ENCODE measurements at regions of chr11 and their contacts with region 1.

Region 1: DNA sequence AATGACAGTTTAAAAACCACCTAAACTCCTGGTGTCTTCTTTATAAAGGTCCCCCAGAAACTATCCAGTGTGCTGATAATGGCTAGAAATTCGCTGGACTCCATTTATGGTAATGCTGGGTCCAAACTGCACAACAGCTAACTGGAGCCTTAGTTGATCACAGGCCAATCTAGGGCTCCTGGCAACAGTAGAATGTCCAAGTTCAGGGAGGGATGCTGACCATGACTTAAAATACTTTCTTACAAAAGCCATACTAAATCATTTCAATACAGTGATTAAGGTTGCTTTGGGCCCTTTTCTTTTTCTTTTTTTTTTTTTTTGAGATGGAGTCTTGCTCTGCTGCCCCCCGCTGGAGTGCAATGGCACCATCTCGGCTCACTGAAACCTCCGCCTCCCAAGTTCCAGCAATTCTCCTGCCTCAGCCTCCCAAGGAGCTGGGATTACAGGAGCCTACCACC is 14.5 kb upstream of the GAB2 start:
- DNase-seq: peak; percentile 17
- ATAC-seq: no peak
- H3K4me3 Mint-ChIP-seq: no peak overlapping the region
- H3K27ac Mint-ChIP-seq: no peak overlapping the region
- H3K4me1 Mint-ChIP-seq: peaks cover 10% of the 10 kb centered on the region
- H3K27me3 Mint-ChIP-seq: no peaks in the 10 kb centered on the region
- CTCF ChIP-seq: peak; percentile 54

Region 2: GRCh38 chr11:78365381-78365792 is 66.7 kb before region 1 on chr11:
- CTCF ChIA-PET with region 1: no interaction called
- POLR2A ChIA-PET with region 1: no interaction called
- intact Hi-C with region 1: no loop called
- DNase-seq: no peak
- ATAC-seq: no peak
- H3K4me3 Mint-ChIP-seq: no peak overlapping the region
- H3K27ac Mint-ChIP-seq: no peak overlapping the region
- H3K4me1 Mint-ChIP-seq: no peaks in the 10 kb centered on the region
- H3K27me3 Mint-ChIP-seq: no peaks in the 10 kb centered on the region
- CTCF ChIP-seq: no peak

Region 3: GRCh38 chr11:78416305-78417178 is 15.5 kb before region 1 on chr11:
- CTCF ChIA-PET with region 1: interaction called, 69 read pairs
- POLR2A ChIA-PET with region 1: no interaction called
- intact Hi-C with region 1: no loop called
- DNase-seq: peak; percentile 86
- ATAC-seq: peak; percentile 76
- H3K4me3 Mint-ChIP-seq: peak overlapping the region; percentile 71
- H3K27ac Mint-ChIP-seq: peak overlapping the region; percentile 37
- H3K4me1 Mint-ChIP-seq: peaks cover 26% of the 10 kb centered on the region
- H3K27me3 Mint-ChIP-seq: peaks cover 29% of the 10 kb centered on the region
- CTCF ChIP-seq: peak; percentile 69

Measured in activated CD8-positive, alpha-beta T cell treated with anti-CD3 and anti-CD28 coated beads for 36 hours (primary cell).